Caco-2 (cell line): ENCODE measurements at regions of chr19 and their contacts with region 1.

Region 1: GRCh38 chr19:40603389-40604135 is 2.4 kb downstream of the LTBP4 start:
- DNase-seq: peak; percentile 100
- H3K4me3 ChIP-seq: peak overlapping the region; percentile 24
- H3K4me3 Mint-ChIP-seq: peak overlapping the region; percentile 87
- H3K27ac Mint-ChIP-seq: peak overlapping the region; percentile 72
- H3K4me1 ChIP-seq: peaks cover 54% of the 10 kb centered on the region
- H3K4me1 Mint-ChIP-seq: peaks cover 52% of the 10 kb centered on the region
- H3K27me3 ChIP-seq: no peaks in the 10 kb centered on the region; the same call in 1 of the 2 replicates
- H3K27me3 Mint-ChIP-seq: peaks cover 11% of the 10 kb centered on the region
- CTCF ChIP-seq: peak in 1 of 2 experiments; percentile 12

Region 2: GRCh38 chr19:40444192-40445028 is 159.2 kb before region 1 on chr19 and contains the start of gene SERTAD3:
- CTCF ChIA-PET with region 1: no interaction called
- POLR2A ChIA-PET with region 1: interaction called, 10 read pairs
- intact Hi-C with region 1: no loop called
- DNase-seq: peak; percentile 97 to 99
- H3K4me3 ChIP-seq: peak within 1 kb of the TSS; percentile 90
- H3K4me3 Mint-ChIP-seq: peak within 1 kb of the TSS; percentile 97
- H3K27ac Mint-ChIP-seq: peak within 1 kb of the TSS; percentile 98
- H3K4me1 ChIP-seq: peaks cover 23% of the 10 kb centered on the region
- H3K4me1 Mint-ChIP-seq: peaks cover 9% of the 10 kb centered on the region
- H3K27me3 ChIP-seq: no peaks in the 10 kb centered on the region
- H3K27me3 Mint-ChIP-seq: no peaks in the 10 kb centered on the region
- CTCF ChIP-seq: peak in 1 of 2 experiments; percentile 61
- total RNA-seq, gene SERTAD3: 45.2 and 52.2 TPM in 2 replicates

Region 3: DNA sequence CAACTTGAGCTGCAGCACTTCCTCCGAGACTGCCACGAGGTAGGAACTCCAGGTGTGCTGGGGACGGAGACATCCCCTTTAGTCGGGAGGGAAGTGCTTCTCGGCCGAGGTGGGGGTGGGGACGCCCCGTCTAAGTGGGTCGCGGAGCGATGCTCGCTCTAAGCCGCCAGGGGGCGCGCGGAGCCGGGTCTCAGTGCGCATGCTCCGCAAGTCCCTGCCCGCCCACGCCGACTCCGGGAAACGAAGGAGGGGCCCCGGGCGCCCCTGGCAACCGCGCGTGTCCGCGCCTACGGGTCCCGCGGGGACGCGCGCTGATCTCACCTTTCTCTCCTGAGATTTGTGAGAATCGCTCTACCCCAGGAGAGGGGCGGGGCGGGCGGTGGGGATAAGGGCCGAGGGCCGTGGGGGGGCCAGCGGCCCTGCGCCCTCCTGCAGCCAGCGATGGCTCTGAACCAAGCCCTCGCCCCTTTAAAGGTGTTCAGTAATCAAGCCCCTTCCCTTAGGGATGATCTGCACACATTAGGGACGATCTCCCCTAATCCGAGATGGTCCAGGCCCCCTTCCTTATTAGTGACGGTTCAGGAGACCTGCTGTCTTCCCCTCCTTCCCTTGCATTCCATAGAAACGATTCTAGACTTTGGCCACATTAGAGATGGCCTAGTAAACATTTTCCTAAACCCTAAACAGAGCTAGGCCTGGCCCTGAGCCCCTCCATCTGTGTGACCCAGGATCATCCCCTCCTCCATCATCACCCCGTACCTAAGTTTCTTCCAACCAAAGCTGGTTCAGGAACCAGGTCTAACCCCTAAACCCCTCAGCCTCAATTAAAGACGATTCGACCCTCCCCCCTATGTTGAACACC is 74.2 kb before region 1 on chr19:
- CTCF ChIA-PET with region 1: interaction called, 10 read pairs
- POLR2A ChIA-PET with region 1: no interaction called
- intact Hi-C with region 1: loop called (anchors 2 kb)
- DNase-seq: peak; percentile 85 to 91
- H3K4me3 ChIP-seq: peak overlapping the region; percentile 49
- H3K4me3 Mint-ChIP-seq: peak overlapping the region; percentile 72
- H3K27ac Mint-ChIP-seq: peak overlapping the region; percentile 19
- H3K4me1 ChIP-seq: peaks cover 12% of the 10 kb centered on the region
- H3K4me1 Mint-ChIP-seq: peaks cover 7% of the 10 kb centered on the region
- H3K27me3 ChIP-seq: no peaks in the 10 kb centered on the region
- H3K27me3 Mint-ChIP-seq: no peaks in the 10 kb centered on the region
- CTCF ChIP-seq: peak; percentile 94 to 98

Region 4: DNA sequence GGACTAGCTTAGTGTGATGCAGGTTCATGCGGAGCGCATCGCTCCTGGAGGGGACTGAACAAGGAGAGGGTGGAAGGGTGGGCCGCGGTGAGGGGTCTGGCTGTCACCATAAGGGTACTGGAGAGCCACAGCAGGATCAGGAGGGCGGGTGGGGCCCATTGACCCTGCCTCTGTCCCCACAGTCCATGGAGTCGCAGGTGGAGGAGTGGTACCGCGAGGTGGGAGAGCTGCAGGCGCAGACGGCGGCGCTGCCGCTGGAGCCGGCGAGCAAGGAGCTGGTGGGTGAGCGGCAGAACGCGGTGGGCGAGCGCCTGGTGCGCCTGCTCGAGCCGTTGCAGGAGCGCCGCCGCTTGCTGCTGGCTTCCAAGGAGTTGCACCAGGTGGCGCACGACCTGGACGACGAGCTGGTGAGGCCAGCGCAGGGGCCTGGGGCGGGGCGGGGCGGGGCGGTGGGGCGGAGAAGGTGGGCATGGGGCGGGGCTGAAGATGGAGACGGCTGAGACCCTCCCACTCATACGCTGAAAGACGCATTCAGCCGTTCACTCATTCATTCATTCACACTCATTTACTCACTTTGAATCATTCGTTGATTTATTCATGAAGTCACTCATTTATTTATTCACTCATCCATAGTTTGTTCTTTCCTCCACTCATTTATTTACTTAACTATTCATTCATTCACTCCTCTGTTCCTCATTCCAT is 54.4 kb before region 1 on chr19:
- CTCF ChIA-PET with region 1: interaction called, 20 read pairs
- POLR2A ChIA-PET with region 1: no interaction called
- intact Hi-C with region 1: loop called (anchors 2 kb)
- DNase-seq: peak; percentile 83 to 88
- H3K4me3 ChIP-seq: peak overlapping the region; percentile 6; the same call in 1 of the 2 replicates
- H3K4me3 Mint-ChIP-seq: peak overlapping the region; percentile 62
- H3K27ac Mint-ChIP-seq: no peak overlapping the region
- H3K4me1 ChIP-seq: 0 out of 2 replicates have a peak, but pooled peaks cover 10% of the 10 kb centered on the region
- H3K4me1 Mint-ChIP-seq: peaks cover 7% of the 10 kb centered on the region
- H3K27me3 ChIP-seq: no peaks in the 10 kb centered on the region; the same call in 1 of the 2 replicates
- H3K27me3 Mint-ChIP-seq: peaks cover 8% of the 10 kb centered on the region
- CTCF ChIP-seq: peak; percentile 54 to 71

Region 5: DNA sequence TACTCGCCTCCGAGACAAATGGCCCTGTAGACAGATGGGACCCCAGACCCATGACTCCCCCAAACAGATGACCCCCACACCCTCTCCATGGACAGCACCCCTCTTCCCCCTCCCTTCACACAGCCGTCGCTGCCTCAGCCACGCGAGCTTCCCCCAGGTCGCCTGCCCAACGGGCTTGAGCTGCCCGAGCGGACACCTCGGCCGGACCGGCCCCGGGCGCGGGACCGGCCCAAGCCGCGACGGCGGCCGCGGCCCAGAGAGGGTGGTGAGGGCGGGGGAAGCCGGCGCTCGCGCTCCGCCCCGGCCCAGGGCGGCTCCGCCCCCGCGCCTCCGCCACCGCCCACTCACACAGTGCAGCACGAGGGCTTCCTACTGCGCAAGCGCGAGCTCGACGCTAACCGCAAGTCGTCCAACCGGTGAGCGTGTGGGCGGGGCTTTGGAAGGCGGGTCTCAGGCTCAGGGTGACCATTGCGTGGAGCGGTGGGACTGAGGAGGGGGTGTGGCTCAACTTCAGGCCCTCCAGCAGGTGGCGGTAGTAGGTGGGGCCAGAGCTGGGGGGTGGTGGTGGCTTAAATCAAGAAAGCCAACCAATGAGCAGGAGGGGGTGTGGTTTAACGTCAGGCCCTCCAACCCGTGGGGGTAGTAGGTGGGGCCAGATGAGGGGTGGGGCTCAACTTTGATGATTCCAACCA is 33.1 kb before region 1 on chr19:
- CTCF ChIA-PET with region 1: interaction called, 29 read pairs
- POLR2A ChIA-PET with region 1: interaction called, 5 read pairs
- intact Hi-C with region 1: loop called (anchors 2 kb)
- DNase-seq: peak; percentile 99 to 100
- H3K4me3 ChIP-seq: peak overlapping the region; percentile 39
- H3K4me3 Mint-ChIP-seq: peak overlapping the region; percentile 57
- H3K27ac Mint-ChIP-seq: peak overlapping the region; percentile 12
- H3K4me1 ChIP-seq: peaks cover 9% of the 10 kb centered on the region; the same call in 1 of the 2 replicates
- H3K4me1 Mint-ChIP-seq: peaks cover 13% of the 10 kb centered on the region
- H3K27me3 ChIP-seq: no peaks in the 10 kb centered on the region; the same call in 1 of the 2 replicates
- H3K27me3 Mint-ChIP-seq: peaks cover 5% of the 10 kb centered on the region
- CTCF ChIP-seq: no peak

Region 6: GRCh38 chr19:40633207-40633606 is 29.6 kb after region 1 on chr19:
- CTCF ChIA-PET with region 1: interaction called, 45 read pairs
- POLR2A ChIA-PET with region 1: interaction called, 4 read pairs
- intact Hi-C with region 1: loop called (anchors 1 kb)
- DNase-seq: no peak
- H3K4me3 ChIP-seq: no peak overlapping the region
- H3K4me3 Mint-ChIP-seq: peak overlapping the region; percentile 65
- H3K27ac Mint-ChIP-seq: no peak overlapping the region
- H3K4me1 ChIP-seq: peaks cover 5% of the 10 kb centered on the region
- H3K4me1 Mint-ChIP-seq: peaks cover 7% of the 10 kb centered on the region
- H3K27me3 ChIP-seq: peaks cover 2% of the 10 kb centered on the region; the same call in 1 of the 2 replicates
- H3K27me3 Mint-ChIP-seq: peaks cover 2% of the 10 kb centered on the region
- CTCF ChIP-seq: no peak